Activated CD8-positive, alpha-beta T cell treated with anti-CD3 and anti-CD28 coated beads, Interleukin-2, amount 10 ng/mL, durations not matched to agents 7 days and 5 days (primary cell): ENCODE measurements at regions of chr19 and their contacts with region 1.

Region 1: GRCh38 chr19:48970923-48971395 is 5.8 kb downstream of the FTL start:
- DNase-seq: peak; percentile 89
- ATAC-seq: peak; percentile 68
- H3K4me3 Mint-ChIP-seq: no peak overlapping the region
- H3K27ac Mint-ChIP-seq: no peak overlapping the region
- H3K4me1 Mint-ChIP-seq: peaks cover 31% of the 10 kb centered on the region
- H3K27me3 Mint-ChIP-seq: no peaks in the 10 kb centered on the region

Region 2: DNA sequence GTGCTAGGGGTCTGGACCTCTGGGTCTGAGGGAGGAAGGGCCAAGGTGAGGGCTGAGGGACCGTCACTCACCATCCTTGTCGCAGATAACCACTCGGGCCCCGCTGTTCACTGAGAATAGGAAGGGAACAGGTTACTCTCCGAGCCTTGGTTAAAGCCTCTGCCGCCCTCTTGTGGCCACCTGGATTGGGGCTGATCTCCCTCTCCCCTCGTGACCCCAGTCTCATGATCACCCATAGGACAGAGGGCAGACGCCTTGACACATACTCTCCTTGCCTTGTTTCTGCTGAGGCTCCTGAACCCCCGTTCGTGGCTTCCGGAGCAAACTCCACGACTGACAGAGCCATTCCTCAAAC is 135.2 kb before region 1 on chr19:
- CTCF ChIA-PET with region 1: interaction called, 12 read pairs
- POLR2A ChIA-PET with region 1: interaction called, 3 read pairs
- DNase-seq: peak; percentile 97
- ATAC-seq: peak; percentile 95
- H3K4me3 Mint-ChIP-seq: peak overlapping the region; percentile 70
- H3K27ac Mint-ChIP-seq: peak overlapping the region; percentile 83
- H3K4me1 Mint-ChIP-seq: peaks cover 21% of the 10 kb centered on the region
- H3K27me3 Mint-ChIP-seq: no peaks in the 10 kb centered on the region

Region 3: GRCh38 chr19:48933382-48933932 is 37.5 kb before region 1 on chr19 and contains the start of gene DHDH:
- CTCF ChIA-PET with region 1: interaction called, 17 read pairs
- POLR2A ChIA-PET with region 1: no interaction called
- DNase-seq: peak; percentile 92
- ATAC-seq: peak; percentile 99
- H3K4me3 Mint-ChIP-seq: peak within 1 kb of the TSS; percentile 79
- H3K27ac Mint-ChIP-seq: peak within 1 kb of the TSS; percentile 73
- H3K4me1 Mint-ChIP-seq: peaks cover 14% of the 10 kb centered on the region
- H3K27me3 Mint-ChIP-seq: peaks cover 3% of the 10 kb centered on the region
- total RNA-seq, gene DHDH: 1.6 to 1.9 TPM

Region 4: DNA sequence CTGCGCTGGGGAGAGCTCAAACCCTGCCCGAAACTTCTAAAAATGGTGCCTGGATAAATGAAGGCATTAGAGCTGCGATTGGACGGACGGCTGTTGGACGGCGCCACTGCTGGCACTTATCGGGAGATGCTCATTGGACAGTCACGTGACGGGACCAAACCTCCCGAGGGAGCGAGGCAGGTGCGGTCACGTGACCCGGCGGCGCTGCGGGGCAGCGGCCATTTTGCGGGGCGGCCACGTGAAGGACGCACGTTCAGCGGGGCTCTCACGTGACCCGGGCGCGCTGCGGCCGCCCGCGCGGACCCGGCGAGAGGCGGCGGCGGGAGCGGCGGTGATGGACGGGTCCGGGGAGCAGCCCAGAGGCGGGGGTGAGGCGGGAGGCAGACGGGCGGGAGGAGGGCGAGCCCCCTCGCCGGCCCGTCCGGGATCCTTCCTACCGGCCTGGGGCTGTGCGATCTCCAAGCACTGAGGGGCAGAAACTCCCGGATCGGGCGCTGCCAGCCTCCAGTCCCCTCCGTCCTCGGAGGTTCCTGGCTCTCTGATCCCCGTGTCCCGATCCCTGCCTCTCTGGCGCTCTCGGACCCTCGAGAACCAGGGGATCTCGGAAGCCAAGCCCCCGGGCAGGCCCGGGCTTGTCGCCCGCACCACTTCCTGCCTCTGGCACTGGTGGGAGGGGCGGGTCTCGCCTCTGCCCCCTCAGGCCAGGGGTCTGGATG is 16.2 kb before region 1 on chr19 and contains the start of gene BAX:
- CTCF ChIA-PET with region 1: interaction called, 13 read pairs
- POLR2A ChIA-PET with region 1: no interaction called
- DNase-seq: peak; percentile 96
- ATAC-seq: peak; percentile 87
- H3K4me3 Mint-ChIP-seq: peak within 1 kb of the TSS; percentile 77
- H3K27ac Mint-ChIP-seq: peak within 1 kb of the TSS; percentile 85
- H3K4me1 Mint-ChIP-seq: peaks cover 39% of the 10 kb centered on the region
- H3K27me3 Mint-ChIP-seq: no peaks in the 10 kb centered on the region
- total RNA-seq, gene BAX: 336 to 350 TPM

Region 5: GRCh38 chr19:48987423-48987722 is 16.4 kb after region 1 on chr19:
- CTCF ChIA-PET with region 1: interaction called, 96 read pairs
- POLR2A ChIA-PET with region 1: no interaction called
- DNase-seq: no peak
- ATAC-seq: no peak
- H3K4me3 Mint-ChIP-seq: no peak overlapping the region
- H3K27ac Mint-ChIP-seq: peak overlapping the region; percentile 6
- H3K4me1 Mint-ChIP-seq: peaks cover 25% of the 10 kb centered on the region
- H3K27me3 Mint-ChIP-seq: no peaks in the 10 kb centered on the region

Region 6: DNA sequence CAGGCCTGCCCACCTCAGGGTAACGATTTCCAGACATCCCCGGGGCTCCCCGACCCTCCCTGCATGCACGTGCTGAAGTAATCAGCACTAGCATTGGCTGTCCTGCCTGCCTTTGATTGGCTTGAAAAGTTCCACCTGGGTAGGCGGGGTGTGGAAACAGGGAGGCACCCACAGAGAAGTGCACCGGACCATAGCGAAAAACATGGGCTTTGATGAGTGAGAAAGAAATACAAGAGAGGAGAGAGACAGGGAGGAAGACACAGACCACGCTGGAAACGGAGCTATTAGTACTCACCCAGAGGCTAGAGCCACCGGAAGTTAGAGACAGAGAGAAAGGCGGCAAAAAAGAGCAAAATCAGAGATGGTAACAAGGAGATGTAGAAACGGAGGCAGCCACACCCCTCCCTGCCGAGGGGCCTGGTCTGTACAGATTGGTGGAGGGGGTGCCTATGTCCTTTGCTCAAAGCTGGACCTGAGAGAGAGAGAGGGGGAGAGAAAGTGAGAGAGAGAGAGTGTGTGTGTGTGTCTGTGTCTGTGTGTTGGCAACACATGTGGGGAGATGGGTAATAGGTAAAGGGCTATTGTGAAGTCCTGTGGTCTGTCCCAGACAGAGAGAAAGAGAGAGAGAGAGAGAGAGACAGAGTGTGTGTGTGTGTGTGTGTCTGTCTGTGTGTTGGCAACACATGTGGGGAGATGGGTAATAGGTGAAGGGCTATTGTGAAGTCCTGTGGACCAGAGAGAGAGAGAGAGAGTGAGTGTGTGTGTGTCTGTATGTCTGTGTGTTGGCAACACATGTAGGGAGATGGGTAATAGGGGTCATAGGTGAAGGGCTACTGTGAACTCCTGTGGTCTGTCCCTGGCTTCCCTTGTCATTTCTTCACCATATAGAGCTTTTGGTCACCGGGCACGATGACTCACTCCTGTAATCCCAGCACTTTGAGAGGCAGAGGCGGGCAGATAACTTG is 50.3 kb after region 1 on chr19:
- CTCF ChIA-PET with region 1: no interaction called
- POLR2A ChIA-PET with region 1: no interaction called
- DNase-seq: no peak
- ATAC-seq: no peak
- H3K4me3 Mint-ChIP-seq: no peak overlapping the region
- H3K27ac Mint-ChIP-seq: peak overlapping the region; percentile 2
- H3K4me1 Mint-ChIP-seq: peaks cover 39% of the 10 kb centered on the region
- H3K27me3 Mint-ChIP-seq: peaks cover 11% of the 10 kb centered on the region

Region 7: DNA sequence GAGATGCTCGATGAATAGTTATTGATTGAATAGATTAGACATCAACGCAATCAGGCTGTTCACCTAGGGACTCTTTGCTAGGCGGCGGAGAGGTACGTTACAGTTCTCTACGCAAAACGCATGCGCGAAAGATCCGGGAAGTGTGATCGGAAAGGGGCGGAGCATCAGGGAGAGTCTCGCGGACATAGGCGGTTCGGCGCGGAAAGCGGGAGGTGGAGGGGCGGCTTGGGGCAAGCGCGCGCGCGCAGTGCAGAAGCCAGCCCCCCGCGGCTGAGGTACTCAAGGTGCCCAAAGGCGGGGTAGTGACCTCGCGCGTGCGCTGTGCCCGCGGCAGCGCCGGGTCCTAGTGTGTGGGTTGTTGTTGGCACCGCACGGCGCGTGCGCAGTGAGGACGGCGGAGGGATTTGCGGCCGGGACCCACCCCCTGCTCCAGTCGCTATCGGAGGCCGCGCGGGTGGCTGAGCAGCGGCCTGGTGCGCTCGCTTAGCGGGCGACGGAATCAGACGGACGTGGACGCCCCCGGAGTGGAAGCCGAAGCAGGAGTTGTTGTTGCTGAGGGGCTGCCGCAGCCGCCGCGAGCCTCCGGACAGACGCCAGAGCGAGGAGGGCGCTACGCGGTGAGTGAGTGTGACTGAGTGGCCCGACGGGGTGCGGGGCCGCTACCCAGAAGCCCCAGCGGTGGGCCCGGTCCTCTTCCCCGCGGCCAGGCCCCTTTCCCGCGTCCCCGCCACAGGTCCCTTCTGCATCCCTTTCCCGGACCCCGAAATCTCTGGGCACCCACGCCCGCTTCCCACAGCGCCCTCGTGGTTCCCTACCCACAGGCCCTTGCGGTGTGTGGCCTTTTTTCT is 114.3 kb after region 1 on chr19 and contains the start of gene SNRNP70:
- CTCF ChIA-PET with region 1: no interaction called
- POLR2A ChIA-PET with region 1: no interaction called
- DNase-seq: peak; percentile 99
- ATAC-seq: peak; percentile 94
- H3K4me3 Mint-ChIP-seq: peak within 1 kb of the TSS; percentile 98
- H3K27ac Mint-ChIP-seq: peak within 1 kb of the TSS; percentile 93
- H3K4me1 Mint-ChIP-seq: peaks cover 26% of the 10 kb centered on the region
- H3K27me3 Mint-ChIP-seq: no peaks in the 10 kb centered on the region
- total RNA-seq, gene SNRNP70: 177 to 193 TPM

Region 8: DNA sequence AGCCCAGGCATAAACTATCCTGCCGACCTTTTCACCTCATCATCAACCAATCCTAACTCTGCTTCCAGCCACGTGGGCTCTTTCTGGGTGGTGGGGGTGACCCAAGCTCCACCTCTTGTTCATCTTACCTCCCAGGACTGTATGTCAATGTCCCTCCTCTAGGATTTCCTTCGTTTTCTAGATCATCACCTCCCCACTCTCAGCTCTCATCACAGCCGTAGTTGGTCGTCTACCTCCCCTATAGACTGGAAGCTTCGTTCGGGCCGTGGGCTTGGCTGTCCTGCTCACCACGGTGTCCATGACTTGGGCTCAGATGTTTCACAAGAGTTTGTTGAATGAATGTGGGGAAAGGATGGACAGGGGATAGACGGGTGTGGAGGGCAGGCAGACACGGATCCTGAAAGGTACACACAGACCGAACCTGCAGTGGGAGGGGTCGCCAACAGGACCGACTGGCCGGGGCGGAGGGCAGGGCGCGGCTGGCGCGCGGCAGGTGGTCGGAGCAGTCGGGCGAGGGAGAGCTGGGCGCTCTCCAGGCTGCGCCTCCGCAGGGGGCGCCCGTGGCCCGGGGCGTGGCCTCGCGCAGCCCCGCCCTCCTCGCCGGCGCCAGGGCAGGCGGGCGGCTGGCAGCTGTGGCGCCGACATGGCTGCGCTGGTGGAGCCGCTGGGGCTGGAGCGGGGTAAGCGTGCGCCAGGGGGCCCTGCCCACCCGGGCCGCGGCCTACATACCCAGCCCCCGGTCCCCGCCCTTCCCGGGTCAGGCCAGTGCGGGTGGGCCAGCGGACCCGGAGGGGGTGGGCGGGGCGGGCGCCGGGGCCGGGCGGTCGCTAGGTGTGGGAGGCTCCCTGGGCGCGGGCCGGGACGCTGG is 143.0 kb after region 1 on chr19 and contains the start of gene LIN7B:
- CTCF ChIA-PET with region 1: no interaction called
- POLR2A ChIA-PET with region 1: no interaction called
- DNase-seq: peak; percentile 76
- ATAC-seq: peak; percentile 77
- H3K4me3 Mint-ChIP-seq: peak within 1 kb of the TSS; percentile 80
- H3K27ac Mint-ChIP-seq: peak within 1 kb of the TSS; percentile 75
- H3K4me1 Mint-ChIP-seq: peaks cover 32% of the 10 kb centered on the region
- H3K27me3 Mint-ChIP-seq: no peaks in the 10 kb centered on the region
- total RNA-seq, gene LIN7B: 3.7 to 6.3 TPM